IMR-90 (cell line): ENCODE measurements at regions of chr18 and their contacts with region 1.

Region 1: GRCh38 chr18:35580701-35581539 is 620 bp upstream of the GALNT1 start:
- DNase-seq: peak; percentile 41
- ATAC-seq: peak; percentile 75
- H3K4me3 ChIP-seq: peak overlapping the region; percentile 50
- H3K27ac ChIP-seq: peak overlapping the region; percentile 49
- H3K4me1 ChIP-seq: peaks cover 5% of the 10 kb centered on the region
- H3K27me3 ChIP-seq: no peaks in the 10 kb centered on the region
- CTCF ChIP-seq: no peak
- POLR2A ChIP-seq: no peak
- RAD21 ChIP-seq: peak; percentile 6; the same call in 1 of the 2 replicates

Region 2: GRCh38 chr18:35497370-35498197 is 83.3 kb before region 1 on chr18 and contains the start of gene INO80C:
- CTCF ChIA-PET with region 1: no interaction called
- POLR2A ChIA-PET with region 1: no interaction called
- dilution Hi-C with region 1: no loop called
- in situ Hi-C with region 1: no loop called
- intact Hi-C with region 1: loop called (anchors 10 kb)
- DNase-seq: peak; percentile 93
- ATAC-seq: peak; percentile 96
- H3K4me3 ChIP-seq: peak within 1 kb of the TSS; percentile 74
- H3K27ac ChIP-seq: peak within 1 kb of the TSS; percentile 93
- H3K4me1 ChIP-seq: peaks cover 3% of the 10 kb centered on the region
- H3K27me3 ChIP-seq: no peaks in the 10 kb centered on the region
- CTCF ChIP-seq: no peak
- POLR2A ChIP-seq: peak; percentile 89
- RAD21 ChIP-seq: peak; percentile 2; the same call in 1 of the 2 replicates
- total RNA-seq, gene INO80C: 4.4 and 5.6 TPM in 2 replicates

Region 3: DNA sequence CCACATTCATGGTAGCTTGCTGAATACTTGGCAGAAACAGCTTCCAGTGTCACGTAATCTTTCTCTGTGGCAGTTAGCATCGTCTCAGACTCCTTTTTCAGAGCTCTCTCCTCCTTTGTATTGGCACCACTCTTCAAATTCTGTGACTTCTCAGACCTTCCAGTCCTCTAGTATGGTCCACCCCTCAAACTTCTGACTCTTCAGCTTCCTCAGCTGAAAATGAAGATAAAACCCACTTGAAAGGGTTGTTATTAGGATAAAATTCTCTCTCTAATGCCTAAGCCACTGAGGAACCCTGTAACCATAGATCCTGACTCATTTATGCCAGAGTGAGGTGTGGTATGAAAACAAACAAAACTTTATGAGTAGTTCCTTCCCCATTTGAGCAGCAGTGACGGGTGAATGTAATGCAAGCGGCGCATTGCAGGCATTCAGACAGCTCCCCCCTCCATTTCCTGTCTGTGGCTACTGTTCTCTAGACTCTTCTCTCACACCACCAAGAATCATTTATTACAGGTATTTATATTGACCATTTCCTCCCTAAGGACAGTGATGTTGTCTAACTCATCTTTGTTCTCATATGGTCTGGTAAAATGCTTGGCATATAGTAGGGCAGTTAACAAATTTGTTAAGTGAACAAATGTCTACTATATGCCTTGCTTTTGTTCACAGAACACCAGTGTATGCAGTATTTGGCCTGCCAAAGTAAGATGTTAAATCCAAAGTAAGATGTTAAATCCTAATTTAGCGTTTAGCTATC is 35.9 kb after region 1 on chr18:
- CTCF ChIA-PET with region 1: no interaction called
- POLR2A ChIA-PET with region 1: no interaction called
- dilution Hi-C with region 1: no loop called
- in situ Hi-C with region 1: no loop called
- intact Hi-C with region 1: loop called (anchors 5 kb)
- DNase-seq: peak; percentile 92
- ATAC-seq: peak; percentile 90
- H3K4me3 ChIP-seq: peak overlapping the region; percentile 16; the same call in 1 of the 2 replicates
- H3K27ac ChIP-seq: no peak overlapping the region
- H3K4me1 ChIP-seq: peaks cover 7% of the 10 kb centered on the region
- H3K27me3 ChIP-seq: no peaks in the 10 kb centered on the region
- CTCF ChIP-seq: no peak
- POLR2A ChIP-seq: no peak
- RAD21 ChIP-seq: no peak

Region 4: GRCh38 chr18:35635170-35635569 is 54.2 kb after region 1 on chr18:
- CTCF ChIA-PET with region 1: no interaction called
- POLR2A ChIA-PET with region 1: interaction called, 4 read pairs
- dilution Hi-C with region 1: no loop called
- in situ Hi-C with region 1: no loop called
- intact Hi-C with region 1: loop called (anchors 5 kb)
- DNase-seq: peak; percentile 86
- ATAC-seq: peak; percentile 90
- H3K4me3 ChIP-seq: no peak overlapping the region
- H3K27ac ChIP-seq: peak overlapping the region; percentile 2; the same call in 1 of the 2 replicates
- H3K4me1 ChIP-seq: peaks cover 8% of the 10 kb centered on the region
- H3K27me3 ChIP-seq: no peaks in the 10 kb centered on the region
- CTCF ChIP-seq: no peak
- POLR2A ChIP-seq: no peak
- RAD21 ChIP-seq: no peak